Activated CD4-positive, alpha-beta memory T cell treated with anti-CD3 and anti-CD28 coated beads for 36 hours (primary cell): ENCODE measurements at regions of chr1 and their contacts with region 1.

Region 1: GRCh38 chr1:212284744-212285684 is at the start of gene PPP2R5A:
- DNase-seq: peak; percentile 99
- H3K4me3 Mint-ChIP-seq: peak within 1 kb of the TSS; percentile 92
- H3K27ac Mint-ChIP-seq: peak within 1 kb of the TSS; percentile 93
- H3K4me1 Mint-ChIP-seq: peaks cover 31% of the 10 kb centered on the region
- H3K27me3 Mint-ChIP-seq: no peaks in the 10 kb centered on the region
- total RNA-seq, gene PPP2R5A: 38.6 to 40.4 TPM

Region 2: GRCh38 chr1:211680752-211681327 is 604.2 kb before region 1 on chr1:
- CTCF ChIA-PET with region 1: interaction called, 5 read pairs
- POLR2A ChIA-PET with region 1: no interaction called
- intact Hi-C with region 1: loop called (anchors 1 kb)
- DNase-seq: peak; percentile 83
- H3K4me3 Mint-ChIP-seq: no peak overlapping the region
- H3K27ac Mint-ChIP-seq: peak overlapping the region; percentile 69
- H3K4me1 Mint-ChIP-seq: peaks cover 9% of the 10 kb centered on the region
- H3K27me3 Mint-ChIP-seq: no peaks in the 10 kb centered on the region

Region 3: GRCh38 chr1:211939876-211940468 is 345.0 kb before region 1 on chr1:
- CTCF ChIA-PET with region 1: no interaction called
- POLR2A ChIA-PET with region 1: no interaction called
- intact Hi-C with region 1: loop called (anchors 5 kb)
- DNase-seq: peak; percentile 81
- H3K4me3 Mint-ChIP-seq: no peak overlapping the region
- H3K27ac Mint-ChIP-seq: no peak overlapping the region
- H3K4me1 Mint-ChIP-seq: peaks cover 44% of the 10 kb centered on the region
- H3K27me3 Mint-ChIP-seq: no peaks in the 10 kb centered on the region

Region 4: GRCh38 chr1:212147581-212148033 is 137.4 kb before region 1 on chr1:
- CTCF ChIA-PET with region 1: no interaction called
- POLR2A ChIA-PET with region 1: no interaction called
- intact Hi-C with region 1: no loop called
- DNase-seq: no peak
- H3K4me3 Mint-ChIP-seq: no peak overlapping the region
- H3K27ac Mint-ChIP-seq: no peak overlapping the region
- H3K4me1 Mint-ChIP-seq: no peaks in the 10 kb centered on the region
- H3K27me3 Mint-ChIP-seq: no peaks in the 10 kb centered on the region

Region 5: GRCh38 chr1:212162635-212163034 is 122.4 kb before region 1 on chr1:
- CTCF ChIA-PET with region 1: no interaction called
- POLR2A ChIA-PET with region 1: interaction called, 5 read pairs
- intact Hi-C with region 1: loop called (anchors 10 kb)
- DNase-seq: peak; percentile 52
- H3K4me3 Mint-ChIP-seq: no peak overlapping the region
- H3K27ac Mint-ChIP-seq: peak overlapping the region; percentile 30
- H3K4me1 Mint-ChIP-seq: peaks cover 29% of the 10 kb centered on the region
- H3K27me3 Mint-ChIP-seq: no peaks in the 10 kb centered on the region

Region 6: GRCh38 chr1:212205843-212206242 is 79.2 kb before region 1 on chr1:
- CTCF ChIA-PET with region 1: no interaction called
- POLR2A ChIA-PET with region 1: no interaction called
- intact Hi-C with region 1: no loop called
- DNase-seq: no peak
- H3K4me3 Mint-ChIP-seq: no peak overlapping the region
- H3K27ac Mint-ChIP-seq: no peak overlapping the region
- H3K4me1 Mint-ChIP-seq: no peaks in the 10 kb centered on the region
- H3K27me3 Mint-ChIP-seq: no peaks in the 10 kb centered on the region

Region 7: DNA sequence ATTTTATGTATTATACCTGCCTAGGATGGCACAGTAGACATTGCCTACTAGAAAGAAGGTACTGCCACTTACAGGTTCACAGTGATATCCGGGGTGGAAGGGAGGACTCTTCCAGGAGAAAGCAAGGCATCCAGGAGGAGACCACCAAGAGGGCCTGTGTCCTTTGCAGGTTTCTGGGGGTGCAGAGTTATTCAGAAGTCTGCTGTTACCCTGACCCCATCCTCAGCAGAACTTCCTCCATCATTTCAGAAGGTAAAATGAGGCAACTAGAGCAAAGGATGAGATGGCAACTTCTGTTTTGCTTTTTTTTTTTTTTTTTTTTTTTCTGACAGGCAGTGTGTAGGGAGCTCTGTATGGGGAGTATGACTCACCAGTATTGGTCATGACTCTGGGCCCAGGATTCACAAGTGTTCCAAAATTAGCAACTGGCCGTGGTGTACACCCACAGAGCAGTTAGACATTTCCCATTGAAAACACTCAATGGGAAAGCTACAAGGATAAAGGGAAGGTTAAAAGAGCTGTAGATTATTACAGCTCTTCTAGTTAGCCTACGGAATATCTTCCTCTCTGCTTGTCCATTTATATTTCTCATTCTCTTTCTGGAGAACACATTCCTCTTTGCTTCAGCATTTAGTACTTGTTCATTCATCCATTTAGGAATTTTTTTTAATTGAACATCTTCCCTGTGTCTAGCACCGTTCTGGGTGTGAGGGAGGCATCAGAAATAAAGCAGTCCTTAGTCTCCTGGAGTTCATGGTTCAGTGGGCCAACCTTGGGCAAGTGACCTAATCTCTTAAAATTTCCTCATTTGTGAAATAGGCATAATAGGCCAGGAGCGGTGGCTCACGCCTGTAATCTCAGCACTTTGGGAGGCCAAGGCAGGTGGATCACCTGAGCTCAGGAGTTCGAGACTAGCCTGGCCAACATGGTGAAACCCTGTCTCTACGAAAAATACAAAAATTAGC is 50.3 kb before region 1 on chr1:
- CTCF ChIA-PET with region 1: interaction called, 8 read pairs
- POLR2A ChIA-PET with region 1: no interaction called
- intact Hi-C with region 1: loop called (anchors 1 kb)
- DNase-seq: peak; percentile 63
- H3K4me3 Mint-ChIP-seq: no peak overlapping the region
- H3K27ac Mint-ChIP-seq: peak overlapping the region; percentile 35
- H3K4me1 Mint-ChIP-seq: peaks cover 33% of the 10 kb centered on the region
- H3K27me3 Mint-ChIP-seq: no peaks in the 10 kb centered on the region

Region 8: DNA sequence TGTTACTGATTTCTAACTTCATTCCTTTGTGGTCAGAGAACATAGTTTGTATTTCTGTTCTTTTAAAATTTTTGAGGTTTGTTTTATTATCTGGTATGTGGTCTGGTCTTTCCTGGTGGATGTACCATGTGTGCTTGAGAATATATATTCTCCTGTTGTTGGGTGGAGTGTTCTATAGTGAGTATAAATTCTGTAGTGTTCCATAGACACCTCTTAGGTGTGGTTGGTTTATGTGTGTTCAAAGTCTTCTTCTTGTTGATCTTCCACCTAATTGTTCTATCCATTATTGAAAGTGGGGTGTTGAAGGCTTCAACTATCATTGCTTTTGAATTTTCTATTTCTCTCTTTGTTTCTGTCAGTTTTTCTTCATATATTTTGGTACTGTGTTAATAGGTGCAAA is 20.3 kb after region 1 on chr1:
- CTCF ChIA-PET with region 1: no interaction called
- POLR2A ChIA-PET with region 1: no interaction called
- intact Hi-C with region 1: no loop called
- DNase-seq: no peak
- H3K4me3 Mint-ChIP-seq: no peak overlapping the region
- H3K27ac Mint-ChIP-seq: no peak overlapping the region
- H3K4me1 Mint-ChIP-seq: peaks cover 56% of the 10 kb centered on the region
- H3K27me3 Mint-ChIP-seq: no peaks in the 10 kb centered on the region

Region 9: DNA sequence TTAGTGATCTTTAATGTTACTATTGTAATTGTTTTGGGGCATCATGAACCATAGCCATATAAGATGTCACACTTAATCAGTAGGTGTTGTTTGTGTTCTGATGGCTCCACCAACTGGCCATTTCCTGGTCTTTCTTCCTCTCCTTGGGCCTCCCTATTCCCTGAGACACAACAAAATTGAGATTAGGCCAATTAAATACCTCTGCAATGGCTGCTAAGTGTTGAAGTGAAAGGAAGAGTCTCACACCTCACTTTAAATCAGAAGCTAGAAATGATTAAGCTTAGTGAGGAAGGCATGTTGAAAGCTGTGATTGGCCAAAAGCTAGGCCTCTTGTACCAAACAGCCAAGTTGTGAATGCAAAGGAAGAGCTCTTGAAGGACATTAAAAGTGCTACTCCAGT is 30.9 kb after region 1 on chr1:
- CTCF ChIA-PET with region 1: interaction called, 6 read pairs
- POLR2A ChIA-PET with region 1: no interaction called
- intact Hi-C with region 1: loop called (anchors 1 kb)
- DNase-seq: peak; percentile 34
- H3K4me3 Mint-ChIP-seq: no peak overlapping the region
- H3K27ac Mint-ChIP-seq: peak overlapping the region; percentile 66
- H3K4me1 Mint-ChIP-seq: peaks cover 47% of the 10 kb centered on the region
- H3K27me3 Mint-ChIP-seq: no peaks in the 10 kb centered on the region

Region 10: GRCh38 chr1:212414328-212415106 is 129.5 kb after region 1 on chr1 and contains the start of gene PACC1:
- CTCF ChIA-PET with region 1: no interaction called
- POLR2A ChIA-PET with region 1: no interaction called
- intact Hi-C with region 1: loop called (anchors 2 kb)
- DNase-seq: peak; percentile 94
- H3K4me3 Mint-ChIP-seq: peak within 1 kb of the TSS; percentile 97
- H3K27ac Mint-ChIP-seq: peak within 1 kb of the TSS; percentile 74
- H3K4me1 Mint-ChIP-seq: peaks cover 20% of the 10 kb centered on the region
- H3K27me3 Mint-ChIP-seq: no peaks in the 10 kb centered on the region
- total RNA-seq, gene PACC1: 9.6 to 10.0 TPM